Upper lobe of right lung (tissue), 1 donor: ENCODE measurements at regions of chr7 and their contacts with region 1.

Region 1: DNA sequence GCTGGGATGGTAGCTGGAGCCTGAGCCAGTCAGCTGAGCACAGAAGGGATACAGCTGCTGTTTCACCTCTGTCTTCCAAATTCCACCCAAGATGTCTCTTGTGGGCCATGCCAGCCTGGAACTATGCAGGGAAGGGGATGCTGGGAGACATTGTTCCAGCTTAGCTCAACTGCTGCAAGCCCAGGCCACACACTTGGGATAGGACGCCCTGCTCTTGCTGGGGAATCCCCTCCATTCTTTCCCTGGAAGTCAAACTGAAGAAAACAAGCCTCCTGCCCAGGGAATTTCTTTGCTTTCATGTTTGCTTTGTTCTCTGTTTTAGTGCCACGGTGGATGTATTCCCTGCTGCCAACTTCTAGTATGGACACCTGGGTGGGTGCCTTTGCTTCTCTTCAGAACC is 55.2 kb upstream of the CDK13 start:
- DNase-seq: no peak
- ATAC-seq: no peak
- H3K4me3 ChIP-seq: no peak overlapping the region
- H3K27ac ChIP-seq: no peak overlapping the region
- H3K4me1 ChIP-seq: no peaks in the 10 kb centered on the region
- H3K27me3 ChIP-seq: no peaks in the 10 kb centered on the region
- CTCF ChIP-seq: no peak

Region 2: DNA sequence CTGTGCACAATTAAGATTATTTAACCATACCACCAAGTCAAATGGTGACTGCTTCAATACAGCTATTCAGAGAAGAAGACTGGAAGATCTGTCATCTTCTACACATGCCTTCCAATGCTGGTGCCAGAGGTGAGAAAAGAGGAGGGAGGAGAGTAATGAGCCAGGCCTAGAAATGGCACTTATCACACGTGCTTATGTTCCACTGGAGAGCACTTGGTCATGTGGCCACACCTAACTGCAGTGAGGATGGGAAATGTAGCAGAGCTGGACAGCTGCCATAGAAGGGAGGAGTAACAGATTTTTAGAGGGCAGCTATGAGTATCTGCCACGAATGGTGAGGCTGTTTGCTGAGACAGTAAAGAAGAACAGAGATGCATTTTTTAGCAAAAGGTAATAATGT is 162.4 kb after region 1 on chr7:
- intact Hi-C with region 1: loop called (anchors 10 kb)
- DNase-seq: no peak
- ATAC-seq: peak; percentile 90
- H3K4me3 ChIP-seq: no peak overlapping the region
- H3K27ac ChIP-seq: no peak overlapping the region
- H3K4me1 ChIP-seq: no peaks in the 10 kb centered on the region
- H3K27me3 ChIP-seq: no peaks in the 10 kb centered on the region
- CTCF ChIP-seq: no peak